A549 (cell line): ENCODE measurements at regions of chr16 and their contacts with region 1.

Region 1: DNA sequence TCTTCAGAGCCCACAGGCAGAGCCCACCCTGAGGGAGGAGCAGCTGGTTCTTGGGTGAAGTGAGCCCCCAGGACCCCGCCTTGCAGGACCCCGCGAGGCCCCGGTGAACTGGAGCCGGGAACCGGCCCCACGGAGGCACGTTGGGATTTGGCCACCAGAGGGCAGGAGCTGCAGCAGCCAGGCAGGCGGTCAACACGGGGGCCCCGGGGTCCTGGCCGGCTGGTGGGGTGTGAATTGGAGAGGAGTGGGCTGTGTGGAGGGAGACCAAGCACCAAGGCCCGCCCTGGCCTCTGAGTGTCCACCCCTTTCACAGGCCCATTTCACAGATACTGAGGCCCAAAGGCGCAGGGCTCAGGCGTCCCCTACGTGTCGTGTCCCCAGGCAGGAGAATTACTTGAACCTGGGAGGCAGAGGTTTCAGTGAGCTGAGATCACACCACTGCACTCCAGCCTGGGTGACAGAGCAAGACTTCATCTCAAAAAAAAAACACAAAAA is 2.2 kb downstream of the DPEP1 start:
- DNase-seq: peak in 1 of 2 experiments; percentile 47
- ATAC-seq: peak; percentile 54 to 83; a peak in 3 of 6 replicates
- H3K4me3 ChIP-seq: no peak overlapping the region
- H3K27ac ChIP-seq: peak overlapping the region in 1 of 2 experiments; percentile 52; a peak in 3 of 6 replicates
- H3K4me1 ChIP-seq: peaks cover 23% of the 10 kb centered on the region
- CTCF ChIP-seq: peak; percentile 77
- EP300 ChIP-seq: no peak
- POLR2A ChIP-seq: no peak
- RAD21 ChIP-seq: peak; percentile 49 to 67

Region 2: DNA sequence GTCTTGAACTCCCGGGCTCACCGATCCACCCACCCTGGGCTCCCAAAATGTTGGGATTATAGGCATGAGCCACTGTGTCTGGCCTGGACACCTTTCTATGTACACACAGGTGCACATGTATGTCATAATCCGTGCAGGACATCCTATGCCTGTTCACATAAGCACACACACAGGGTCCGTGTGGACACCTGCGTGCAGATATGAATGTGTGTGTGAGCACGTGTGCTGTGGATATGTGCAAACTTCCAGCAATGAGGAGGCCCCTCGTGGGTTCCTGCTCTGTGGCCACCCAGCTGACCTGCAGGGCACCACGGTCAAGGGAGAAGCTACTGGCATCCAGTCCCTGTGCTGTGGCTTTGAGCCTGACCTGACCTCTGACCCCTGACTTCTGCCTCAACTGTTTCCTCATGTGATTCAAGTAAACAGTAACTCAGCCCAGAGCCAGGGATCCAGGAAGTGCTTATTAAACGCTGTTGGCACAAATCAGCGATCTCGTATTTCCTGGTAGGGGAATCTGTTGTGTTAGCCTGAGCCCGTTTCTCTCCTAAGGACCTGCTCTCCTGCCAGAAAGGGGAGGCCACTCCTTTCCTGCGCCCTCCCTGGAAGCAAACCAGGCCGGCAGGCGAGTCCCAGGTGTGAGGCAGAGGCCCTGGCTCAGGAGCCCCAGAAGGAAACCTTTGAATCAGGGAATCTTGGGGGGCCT is 33.6 kb before region 1 on chr16:
- CTCF ChIA-PET with region 1: interaction called, 17 read pairs
- POLR2A ChIA-PET with region 1: no interaction called
- DNase-seq: peak in 1 of 2 experiments; percentile 43
- ATAC-seq: peak in 1 of 2 experiments; percentile 34; a peak in 3 of 6 replicates
- H3K4me3 ChIP-seq: no peak overlapping the region
- H3K27ac ChIP-seq: peak overlapping the region; percentile 78
- H3K4me1 ChIP-seq: peaks cover 22% of the 10 kb centered on the region
- CTCF ChIP-seq: no peak
- EP300 ChIP-seq: no peak
- POLR2A ChIP-seq: no peak
- RAD21 ChIP-seq: no peak

Region 3: GRCh38 chr16:89633064-89633631 is 17.5 kb after region 1 on chr16:
- CTCF ChIA-PET with region 1: interaction called, 143 read pairs
- POLR2A ChIA-PET with region 1: interaction called, 3 read pairs
- DNase-seq: peak; percentile 72 to 83
- ATAC-seq: peak; percentile 84 to 86
- H3K4me3 ChIP-seq: peak overlapping the region; percentile 24
- H3K27ac ChIP-seq: peak overlapping the region; percentile 87 to 88
- H3K4me1 ChIP-seq: peaks cover 27% of the 10 kb centered on the region
- CTCF ChIP-seq: no peak
- EP300 ChIP-seq: no peak; a peak in 1 of 5 replicates
- POLR2A ChIP-seq: peak; percentile 54
- RAD21 ChIP-seq: no peak

Region 4: DNA sequence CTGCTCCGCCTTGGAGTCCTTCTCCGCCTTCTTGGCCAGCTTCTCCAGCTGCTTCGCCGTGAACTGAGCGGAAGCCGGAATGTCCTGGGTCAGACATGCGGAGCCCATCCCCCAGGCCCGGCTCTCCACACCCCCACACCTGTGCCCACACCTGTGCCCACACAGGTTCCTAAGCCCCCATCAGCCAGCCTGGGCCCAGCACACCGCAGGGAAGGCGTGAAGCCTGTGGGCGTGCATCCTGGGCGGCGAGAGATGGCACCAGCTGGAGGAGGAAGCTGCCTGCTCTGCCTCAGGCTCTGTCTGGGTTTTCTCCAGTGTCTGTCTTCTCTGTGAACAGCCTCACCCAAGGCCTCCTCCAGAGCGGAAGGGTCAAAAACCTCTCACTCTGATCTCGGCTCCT is 35.9 kb after region 1 on chr16:
- CTCF ChIA-PET with region 1: interaction called, 35 read pairs
- POLR2A ChIA-PET with region 1: no interaction called
- DNase-seq: no peak
- ATAC-seq: no peak
- H3K4me3 ChIP-seq: no peak overlapping the region
- H3K27ac ChIP-seq: no peak overlapping the region
- H3K4me1 ChIP-seq: peaks cover 8% of the 10 kb centered on the region; the same call in 2 of the 3 replicates
- CTCF ChIP-seq: no peak
- EP300 ChIP-seq: no peak
- POLR2A ChIP-seq: no peak
- RAD21 ChIP-seq: no peak

Region 5: DNA sequence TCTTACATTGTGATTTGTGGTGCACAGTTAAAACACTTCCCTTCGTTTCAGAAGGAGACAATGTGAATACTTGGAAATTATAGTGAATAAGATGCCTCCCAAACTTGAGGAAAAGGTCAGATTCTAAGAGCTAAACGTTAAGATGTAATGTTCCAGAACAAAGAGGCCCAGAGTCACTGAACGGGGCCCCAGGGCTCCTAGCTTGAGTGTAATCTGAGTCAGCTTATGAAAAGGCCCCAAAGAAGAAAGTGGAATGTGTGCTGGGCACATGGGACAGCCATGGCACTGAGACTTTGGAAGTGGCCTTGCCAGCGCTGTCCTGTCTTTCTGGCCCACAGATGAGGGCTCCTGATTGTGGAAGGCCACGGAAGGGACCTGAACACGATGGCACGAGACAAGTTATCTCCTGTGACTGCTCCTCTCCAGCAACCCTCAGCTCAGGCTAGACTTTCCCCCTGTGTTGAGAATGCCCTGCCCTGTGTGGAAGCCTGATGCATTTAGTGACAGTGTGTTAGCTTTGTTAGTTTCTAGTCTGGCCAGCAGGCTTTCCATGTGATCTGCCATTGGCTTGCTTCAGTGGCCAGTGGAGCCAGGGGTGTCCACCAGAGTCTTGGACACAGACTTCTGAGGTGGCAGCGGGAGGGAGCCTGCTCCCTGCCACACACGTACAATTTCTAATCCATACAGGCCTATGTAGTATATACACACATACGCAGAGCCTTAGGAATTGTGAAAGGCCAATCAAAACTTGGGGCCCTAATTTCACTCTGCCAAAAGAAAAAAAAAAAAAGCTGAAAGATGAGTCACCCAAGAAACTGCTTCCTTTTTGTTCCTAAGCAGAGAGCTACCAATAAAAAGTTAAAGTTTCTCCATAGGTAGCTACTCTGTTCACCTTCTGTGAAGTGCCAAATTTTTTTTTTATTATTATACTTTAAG is 55.1 kb after region 1 on chr16:
- CTCF ChIA-PET with region 1: interaction called, 14 read pairs
- POLR2A ChIA-PET with region 1: no interaction called
- DNase-seq: no peak
- ATAC-seq: peak; percentile 38 to 49; a peak in 4 of 6 replicates
- H3K4me3 ChIP-seq: no peak overlapping the region
- H3K27ac ChIP-seq: no peak overlapping the region
- H3K4me1 ChIP-seq: no peaks in the 10 kb centered on the region
- CTCF ChIP-seq: no peak
- EP300 ChIP-seq: no peak
- POLR2A ChIP-seq: no peak
- RAD21 ChIP-seq: no peak

Region 6: GRCh38 chr16:89741342-89742014 is 125.8 kb after region 1 on chr16:
- CTCF ChIA-PET with region 1: no interaction called
- POLR2A ChIA-PET with region 1: no interaction called
- DNase-seq: no peak
- ATAC-seq: peak; percentile 5 to 10; a peak in 3 of 6 replicates
- H3K4me3 ChIP-seq: no peak overlapping the region
- H3K27ac ChIP-seq: no peak overlapping the region
- H3K4me1 ChIP-seq: no peaks in the 10 kb centered on the region
- CTCF ChIP-seq: no peak
- EP300 ChIP-seq: no peak
- POLR2A ChIP-seq: no peak
- RAD21 ChIP-seq: no peak

Region 7: GRCh38 chr16:89909777-89910716 is 294.4 kb after region 1 on chr16:
- CTCF ChIA-PET with region 1: no interaction called
- POLR2A ChIA-PET with region 1: no interaction called
- DNase-seq: peak; percentile 79 to 80
- ATAC-seq: peak; percentile 64 to 87
- H3K4me3 ChIP-seq: no peak overlapping the region
- H3K27ac ChIP-seq: peak overlapping the region in 1 of 2 experiments; percentile 68; a peak in 3 of 6 replicates
- H3K4me1 ChIP-seq: peaks cover 4% of the 10 kb centered on the region; the same call in 2 of the 3 replicates
- CTCF ChIP-seq: peak; percentile 66
- EP300 ChIP-seq: no peak
- POLR2A ChIP-seq: 0 out of 2 replicates have a peak, but pooled peaks have one; percentile 11
- RAD21 ChIP-seq: peak; percentile 43 to 55; a peak in 4 of 5 replicates